Panc1 (cell line): ENCODE measurements at regions of chr15 and their contacts with region 1.

Region 1: DNA sequence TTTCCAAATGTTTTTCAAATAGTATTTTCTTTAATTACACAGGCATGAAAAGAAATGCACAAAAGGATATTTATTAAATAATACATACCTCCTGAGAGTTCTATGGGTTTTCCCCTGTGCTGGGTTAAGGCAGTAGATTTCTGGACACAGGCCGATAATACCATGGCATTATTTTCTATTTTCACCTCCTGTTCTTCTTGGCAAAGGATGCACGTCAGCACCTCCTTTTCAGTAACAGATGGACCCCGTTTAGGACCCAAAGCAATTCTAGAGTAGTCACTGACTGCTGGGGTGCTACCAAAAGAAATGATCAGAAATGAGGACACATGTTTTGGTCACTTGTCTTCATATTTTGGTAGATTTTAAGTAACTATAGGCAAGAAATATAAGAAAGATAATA is 86.4 kb upstream of the TTBK2 start:
- DNase-seq: no peak
- ATAC-seq: no peak
- H3K4me3 ChIP-seq: no peak overlapping the region
- H3K27ac ChIP-seq: no peak overlapping the region
- H3K4me1 ChIP-seq: no peaks in the 10 kb centered on the region
- H3K27me3 ChIP-seq: no peaks in the 10 kb centered on the region
- CTCF ChIP-seq: no peak

Region 2: GRCh38 chr15:42548253-42549031 is 458.5 kb before region 1 on chr15 and contains the starts of genes HAUS2 and LRRC57:
- CTCF ChIA-PET with region 1: no interaction called
- POLR2A ChIA-PET with region 1: no interaction called
- in situ Hi-C with region 1: no loop called
- intact Hi-C with region 1: no loop called
- DNase-seq: peak; percentile 47
- ATAC-seq: peak; percentile 97
- H3K4me3 ChIP-seq: peak within 1 kb of the TSS; percentile 83 to 100
- H3K27ac ChIP-seq: peak within 1 kb of the TSS; percentile 94
- H3K4me1 ChIP-seq: peaks cover 27% of the 10 kb centered on the region
- H3K27me3 ChIP-seq: no peaks in the 10 kb centered on the region
- CTCF ChIP-seq: no peak
- total RNA-seq, gene HAUS2: 42.4 TPM
- total RNA-seq, gene LRRC57: 39.2 TPM

Region 3: DNA sequence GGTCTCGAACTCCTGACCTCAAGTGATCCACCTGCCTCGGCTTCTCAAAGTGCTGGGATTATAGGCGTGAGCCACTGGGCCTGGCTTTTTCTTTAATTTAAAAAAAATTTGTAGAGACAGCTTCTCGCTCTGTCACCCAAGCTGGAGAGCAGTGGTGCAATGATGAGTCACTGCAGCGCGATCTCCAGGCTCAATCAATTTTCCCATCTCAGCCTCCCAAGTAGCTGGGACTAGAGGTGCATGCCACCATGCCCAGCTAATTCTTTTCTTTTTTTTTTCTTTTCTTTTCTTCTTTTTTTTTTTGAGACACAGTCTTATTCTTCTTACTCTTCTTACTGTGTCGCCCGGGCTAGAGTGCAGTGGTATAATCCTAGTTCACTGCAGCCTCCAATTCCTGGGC is 383.7 kb after region 1 on chr15:
- CTCF ChIA-PET with region 1: no interaction called
- POLR2A ChIA-PET with region 1: interaction called, 23 read pairs
- in situ Hi-C with region 1: no loop called
- intact Hi-C with region 1: no loop called
- DNase-seq: no peak
- ATAC-seq: no peak
- H3K4me3 ChIP-seq: no peak overlapping the region
- H3K27ac ChIP-seq: no peak overlapping the region
- H3K4me1 ChIP-seq: no peaks in the 10 kb centered on the region
- H3K27me3 ChIP-seq: no peaks in the 10 kb centered on the region
- CTCF ChIP-seq: no peak